ENCODE measurements at regions of chr6 and their contacts with region 1.

Region 1: DNA sequence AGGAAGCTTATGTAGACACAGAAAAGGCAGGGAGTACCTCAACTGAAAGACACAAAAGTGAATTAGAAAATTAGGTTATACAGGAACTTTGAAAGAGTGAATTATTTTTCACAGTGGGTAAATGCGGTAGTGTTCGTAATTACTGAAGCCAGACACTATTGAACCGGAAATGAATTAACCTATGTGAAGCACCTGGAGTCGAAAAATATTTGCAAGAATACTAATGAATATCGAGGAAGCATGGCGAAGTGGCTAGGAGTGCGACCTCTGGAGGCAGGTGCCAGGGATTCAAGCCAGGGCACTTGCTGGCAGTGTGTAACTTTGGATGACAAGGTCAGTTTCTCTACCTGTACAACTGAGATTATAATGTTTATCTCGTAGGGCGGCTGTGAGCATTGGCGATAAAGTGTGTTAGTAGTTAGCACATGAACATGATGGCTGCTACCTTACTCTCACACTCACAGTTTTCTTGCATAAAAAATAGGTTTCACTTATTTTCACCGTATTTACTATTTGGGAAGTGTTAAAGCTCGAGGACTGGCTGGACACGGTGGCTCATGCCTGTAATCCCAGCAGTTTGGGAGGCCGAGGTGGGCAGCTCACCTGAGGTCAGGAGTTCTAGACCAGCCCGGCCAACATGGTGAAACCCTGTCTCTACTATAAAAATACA is 567 bp upstream of the SLC18B1 start:
- DNase-seq: peak; percentile 64
- H3K4me3 ChIP-seq: peak overlapping the region; percentile 56 to 59
- H3K27ac ChIP-seq: no peak overlapping the region
- H3K4me1 ChIP-seq: no peaks in the 10 kb centered on the region
- H3K27me3 ChIP-seq: no peaks in the 10 kb centered on the region
- CTCF ChIP-seq: peak; percentile 43 to 60 (median 48)
- POLR2A ChIP-seq: no peak

Region 2: DNA sequence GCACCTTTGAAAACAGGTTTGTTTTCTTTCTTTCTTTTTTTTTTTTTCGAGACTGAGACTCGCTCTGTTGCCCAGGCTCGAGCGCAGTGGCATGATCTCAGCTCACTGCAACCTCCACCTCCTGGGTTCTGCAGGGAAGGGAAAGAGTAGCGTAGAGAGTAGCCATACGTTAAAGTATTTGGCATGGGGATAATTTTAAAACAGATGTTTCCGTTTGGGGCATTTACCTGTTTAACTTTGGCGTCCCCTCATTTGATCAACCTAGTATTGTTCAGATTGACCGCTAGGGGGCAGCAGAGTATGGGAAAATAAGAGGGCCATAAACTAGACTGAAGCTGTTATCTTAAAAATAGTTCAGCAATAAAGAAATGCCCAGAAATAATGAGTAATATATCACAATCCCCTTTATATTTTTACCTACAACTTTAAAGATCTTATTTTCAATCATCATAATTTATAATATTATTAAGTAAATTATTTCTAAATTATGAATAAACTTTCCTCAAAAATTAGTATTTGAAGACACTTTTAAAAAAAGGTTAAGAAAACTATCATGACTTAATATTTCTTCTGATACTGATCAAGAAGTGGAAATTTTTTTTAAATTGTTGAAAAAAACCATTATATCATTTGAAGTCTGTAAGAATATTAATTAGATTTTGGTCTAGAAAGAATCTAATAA is 268.6 kb before region 1 on chr6:
- intact Hi-C with region 1: loop called (anchors 10 kb)
- DNase-seq: peak; percentile 34
- H3K4me3 ChIP-seq: no peak overlapping the region
- H3K27ac ChIP-seq: no peak overlapping the region
- H3K4me1 ChIP-seq: no peaks in the 10 kb centered on the region
- H3K27me3 ChIP-seq: no peaks in the 10 kb centered on the region
- CTCF ChIP-seq: peak; percentile 61 to 92 (median 70)
- POLR2A ChIP-seq: no peak

Region 3: GRCh38 chr6:132669690-132670291 is 129.2 kb before region 1 on chr6:
- intact Hi-C with region 1: loop called (anchors 10 kb)
- DNase-seq: no peak
- H3K4me3 ChIP-seq: no peak overlapping the region
- H3K27ac ChIP-seq: no peak overlapping the region
- H3K4me1 ChIP-seq: no peaks in the 10 kb centered on the region
- H3K27me3 ChIP-seq: no peaks in the 10 kb centered on the region
- CTCF ChIP-seq: peak; percentile 22 to 57 (median 50)
- POLR2A ChIP-seq: no peak